B cell (primary cell): ENCODE measurements at regions of chr7 and their contacts with region 1.

Region 1: DNA sequence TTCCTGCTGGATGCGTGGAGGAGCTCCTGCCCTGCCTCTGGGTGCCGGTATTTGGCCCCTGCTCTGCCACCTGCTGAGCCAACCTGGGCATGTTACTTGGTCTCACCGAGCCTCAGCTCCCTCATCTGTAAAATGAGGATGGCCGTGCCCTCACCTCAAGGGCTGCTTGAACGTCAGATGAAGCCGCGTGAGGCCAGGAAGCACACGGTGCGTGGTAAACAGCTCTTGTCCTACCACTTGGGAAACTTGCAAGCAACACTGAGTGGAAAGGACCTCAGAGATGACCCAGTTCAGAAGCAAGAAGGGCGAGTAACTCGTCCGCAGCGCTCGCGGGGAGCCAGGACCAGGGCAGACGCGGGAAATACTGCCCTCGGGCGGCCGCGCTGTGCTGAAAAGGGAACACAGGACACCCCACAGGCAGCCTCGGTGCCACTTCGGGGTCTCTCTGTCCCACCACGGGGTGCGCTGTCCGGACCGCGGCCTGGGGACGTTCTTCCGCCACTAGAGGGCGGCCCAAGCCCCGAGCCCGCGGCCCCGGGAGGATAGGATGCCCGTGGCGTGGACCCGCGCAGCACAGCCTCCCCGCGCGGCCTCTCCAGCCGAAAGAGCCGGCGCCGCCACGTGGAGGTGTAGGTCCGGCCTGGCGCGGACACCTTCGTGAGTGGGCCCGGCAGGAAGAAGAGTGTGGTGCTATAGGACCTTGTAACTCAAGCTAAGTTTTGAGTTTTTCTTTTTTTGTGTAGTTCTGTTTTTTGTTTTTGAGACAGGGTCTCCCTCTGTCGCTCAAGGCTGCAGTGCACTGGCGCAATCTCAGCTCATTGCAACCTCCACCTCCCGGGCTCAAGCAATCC is 94.1 kb downstream of the PRKAG2 start:
- DNase-seq: peak; percentile 86
- ATAC-seq: peak; percentile 97
- H3K4me3 ChIP-seq: peak overlapping the region in 3 of 5 experiments; percentile 16 to 38 (median 23)
- H3K4me3 Mint-ChIP-seq: peak overlapping the region; percentile 73
- H3K27ac ChIP-seq: no peak overlapping the region
- H3K27ac Mint-ChIP-seq: peak overlapping the region; percentile 13
- H3K4me1 ChIP-seq: peaks cover 8 to 13% of the 10 kb centered on the region in 2 donors
- H3K4me1 Mint-ChIP-seq: peaks cover 10% of the 10 kb centered on the region
- H3K27me3 ChIP-seq: no peaks in the 10 kb centered on the region
- H3K27me3 Mint-ChIP-seq: no peaks in the 10 kb centered on the region
- CTCF ChIP-seq: peak; percentile 97

Region 2: GRCh38 chr7:151276666-151277590 is 505.9 kb before region 1 on chr7:
- CTCF ChIA-PET with region 1: no interaction called
- POLR2A ChIA-PET with region 1: no interaction called
- intact Hi-C with region 1: no loop called
- DNase-seq: peak; percentile 60
- ATAC-seq: peak; percentile 64
- H3K4me3 ChIP-seq: peak overlapping the region in 4 of 5 experiments; percentile 11 to 50 (median 44)
- H3K4me3 Mint-ChIP-seq: peak overlapping the region; percentile 82
- H3K27ac ChIP-seq: no peak overlapping the region
- H3K27ac Mint-ChIP-seq: no peak overlapping the region
- H3K4me1 ChIP-seq: peaks cover 4 to 11% of the 10 kb centered on the region in 2 donors
- H3K4me1 Mint-ChIP-seq: peaks cover 10% of the 10 kb centered on the region
- H3K27me3 ChIP-seq: peaks cover 0 to 39% (median 6%) of the 10 kb centered on the region in 4 experiments
- H3K27me3 Mint-ChIP-seq: peaks cover 55% of the 10 kb centered on the region
- CTCF ChIP-seq: no peak

Region 3: GRCh38 chr7:151793531-151793951 is 10.7 kb after region 1 on chr7:
- CTCF ChIA-PET with region 1: interaction called, 15 read pairs
- POLR2A ChIA-PET with region 1: no interaction called
- intact Hi-C with region 1: no loop called
- DNase-seq: no peak
- ATAC-seq: no peak
- H3K4me3 ChIP-seq: no peak overlapping the region
- H3K4me3 Mint-ChIP-seq: no peak overlapping the region
- H3K27ac ChIP-seq: no peak overlapping the region
- H3K27ac Mint-ChIP-seq: no peak overlapping the region
- H3K4me1 ChIP-seq: peaks cover 4 to 17% of the 10 kb centered on the region in 2 donors
- H3K4me1 Mint-ChIP-seq: peaks cover 22% of the 10 kb centered on the region
- H3K27me3 ChIP-seq: no peaks in the 10 kb centered on the region
- H3K27me3 Mint-ChIP-seq: no peaks in the 10 kb centered on the region
- CTCF ChIP-seq: no peak

Region 4: GRCh38 chr7:151851145-151851751 is 68.4 kb after region 1 on chr7:
- CTCF ChIA-PET with region 1: interaction called, 13 read pairs
- POLR2A ChIA-PET with region 1: no interaction called
- intact Hi-C with region 1: no loop called
- DNase-seq: peak; percentile 79
- ATAC-seq: peak; percentile 71
- H3K4me3 ChIP-seq: peak overlapping the region; percentile 26 to 62 (median 53)
- H3K4me3 Mint-ChIP-seq: peak overlapping the region; percentile 89
- H3K27ac ChIP-seq: peak overlapping the region; percentile 44 to 54
- H3K27ac Mint-ChIP-seq: peak overlapping the region; percentile 82
- H3K4me1 ChIP-seq: peaks cover 21 to 31% of the 10 kb centered on the region in 2 donors
- H3K4me1 Mint-ChIP-seq: peaks cover 32% of the 10 kb centered on the region
- H3K27me3 ChIP-seq: no peaks in the 10 kb centered on the region
- H3K27me3 Mint-ChIP-seq: no peaks in the 10 kb centered on the region
- CTCF ChIP-seq: no peak

Region 5: DNA sequence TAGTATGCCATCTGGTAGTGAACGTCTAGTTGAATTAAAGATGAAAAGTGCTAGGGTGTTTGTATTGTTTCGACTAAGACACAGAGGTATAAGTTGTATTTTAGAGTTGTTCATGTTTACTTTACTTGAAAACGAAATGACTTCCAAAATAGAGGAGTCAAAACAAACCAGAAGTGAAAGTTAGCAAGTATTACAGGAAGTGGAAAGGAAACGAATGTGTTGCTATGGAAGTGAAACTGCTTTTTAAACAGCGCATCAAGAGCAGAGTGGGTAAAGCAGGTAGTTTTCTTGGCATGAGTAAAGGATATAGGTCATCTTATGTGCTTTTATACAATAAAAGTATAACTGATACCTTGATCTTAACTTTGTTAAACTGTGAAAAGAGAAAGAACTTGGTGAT is 153.4 kb after region 1 on chr7:
- CTCF ChIA-PET with region 1: interaction called, 29 read pairs
- POLR2A ChIA-PET with region 1: interaction called, 3 read pairs
- intact Hi-C with region 1: loop called (anchors 1 kb)
- DNase-seq: peak; percentile 82
- ATAC-seq: peak; percentile 81
- H3K4me3 ChIP-seq: peak overlapping the region in 3 of 5 experiments; percentile 6 to 48 (median 38)
- H3K4me3 Mint-ChIP-seq: peak overlapping the region; percentile 94
- H3K27ac ChIP-seq: peak overlapping the region; percentile 70 to 82
- H3K27ac Mint-ChIP-seq: peak overlapping the region; percentile 99
- H3K4me1 ChIP-seq: peaks cover 33 to 37% of the 10 kb centered on the region in 2 donors
- H3K4me1 Mint-ChIP-seq: peaks cover 39% of the 10 kb centered on the region
- H3K27me3 ChIP-seq: no peaks in the 10 kb centered on the region
- H3K27me3 Mint-ChIP-seq: peaks cover 4% of the 10 kb centered on the region
- CTCF ChIP-seq: no peak

Region 6: DNA sequence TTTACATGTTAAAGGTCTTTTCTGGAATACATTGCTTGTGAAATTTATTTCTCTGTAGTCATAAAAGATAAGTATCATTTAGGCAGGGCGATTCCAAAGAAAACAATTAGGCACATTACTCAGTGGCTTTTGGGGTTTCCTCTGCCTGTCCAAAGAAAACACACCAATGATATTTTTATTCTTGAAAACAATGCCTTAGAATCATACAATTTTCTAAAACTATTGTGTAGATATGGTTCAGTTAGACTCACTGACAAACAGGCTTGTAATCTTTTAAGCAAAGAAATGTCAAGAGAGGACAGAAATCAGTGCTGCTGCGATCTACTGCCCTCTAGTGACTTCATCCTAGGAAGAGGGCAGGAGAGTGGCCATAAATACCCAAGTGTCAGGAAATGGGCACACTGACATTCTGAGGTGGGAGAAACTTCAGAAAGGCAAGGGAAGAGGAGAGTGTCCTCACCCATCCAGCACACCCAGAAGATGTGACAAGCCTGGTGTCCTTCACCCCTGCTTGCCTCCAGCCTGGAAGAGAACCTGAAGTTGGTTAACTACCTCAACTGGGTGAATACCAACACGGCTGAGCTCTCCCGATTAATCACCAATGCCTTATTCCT is 363.1 kb after region 1 on chr7:
- CTCF ChIA-PET with region 1: interaction called, 10 read pairs
- POLR2A ChIA-PET with region 1: no interaction called
- intact Hi-C with region 1: loop called (anchors 2 kb)
- DNase-seq: peak; percentile 22
- ATAC-seq: no peak
- H3K4me3 ChIP-seq: no peak overlapping the region
- H3K4me3 Mint-ChIP-seq: no peak overlapping the region
- H3K27ac ChIP-seq: no peak overlapping the region
- H3K27ac Mint-ChIP-seq: no peak overlapping the region
- H3K4me1 ChIP-seq: no peaks in the 10 kb centered on the region
- H3K4me1 Mint-ChIP-seq: peaks cover 3% of the 10 kb centered on the region
- H3K27me3 ChIP-seq: no peaks in the 10 kb centered on the region
- H3K27me3 Mint-ChIP-seq: no peaks in the 10 kb centered on the region
- CTCF ChIP-seq: peak; percentile 35